Activated CD4-positive, alpha-beta T cell treated with anti-CD3 and anti-CD28 coated beads, Interleukin-2, amount 10 ng/mL, durations not matched to agents 24 days and 14 days (primary cell): ENCODE measurements at regions of chr3 and their contacts with region 1.

Region 1: DNA sequence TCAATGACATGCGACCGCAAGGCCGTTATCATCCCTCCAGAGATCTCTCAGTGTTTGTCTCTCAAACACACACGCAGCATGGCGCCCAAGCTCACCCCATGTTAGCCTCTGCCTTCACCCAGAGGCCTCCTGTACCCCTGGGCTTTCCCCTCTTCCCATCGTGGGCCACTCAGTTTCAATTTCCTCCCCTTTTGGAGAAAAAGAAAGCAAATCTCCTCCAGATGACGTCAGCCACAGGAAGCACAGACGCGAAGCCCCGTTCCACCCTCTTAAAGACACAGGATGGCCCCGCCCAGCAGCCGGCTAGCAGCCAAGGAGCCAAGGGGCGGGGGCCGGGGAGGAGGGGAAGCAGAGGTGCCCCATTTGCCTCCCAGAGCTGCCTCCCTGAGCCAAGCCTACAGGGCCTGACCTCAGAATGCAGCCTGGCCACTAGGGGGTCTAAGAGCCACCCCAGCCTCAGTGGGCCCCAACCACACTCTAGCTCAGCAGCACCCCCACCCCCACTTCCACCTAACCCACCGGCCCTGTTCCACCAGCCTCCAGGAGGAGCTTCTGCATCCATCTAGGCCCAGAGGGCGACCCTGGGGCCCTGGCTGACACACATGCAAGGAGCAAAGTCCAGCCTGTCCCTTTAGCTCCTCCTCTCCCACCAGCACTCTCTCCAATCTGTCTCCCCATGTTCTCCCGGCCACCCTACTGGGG is 26.5 kb downstream of the ATRIP start:
- DNase-seq: peak; percentile 98
- H3K4me3 Mint-ChIP-seq: peak overlapping the region; percentile 85
- H3K27ac Mint-ChIP-seq: peak overlapping the region; percentile 97
- H3K4me1 Mint-ChIP-seq: peaks cover 47% of the 10 kb centered on the region
- H3K27me3 Mint-ChIP-seq: no peaks in the 10 kb centered on the region

Region 2: GRCh38 chr3:48352547-48352946 is 120.5 kb before region 1 on chr3:
- intact Hi-C with region 1: no loop called
- DNase-seq: no peak
- H3K4me3 Mint-ChIP-seq: no peak overlapping the region
- H3K27ac Mint-ChIP-seq: no peak overlapping the region
- H3K4me1 Mint-ChIP-seq: no peaks in the 10 kb centered on the region
- H3K27me3 Mint-ChIP-seq: peaks cover 27% of the 10 kb centered on the region

Region 3: GRCh38 chr3:48446425-48447193 is 26.5 kb before region 1 on chr3 and contains the start of gene ATRIP:
- intact Hi-C with region 1: loop called (anchors 1 kb)
- DNase-seq: peak; percentile 98
- H3K4me3 Mint-ChIP-seq: peak within 1 kb of the TSS; percentile 93
- H3K27ac Mint-ChIP-seq: peak within 1 kb of the TSS; percentile 91
- H3K4me1 Mint-ChIP-seq: peaks cover 25% of the 10 kb centered on the region
- H3K27me3 Mint-ChIP-seq: no peaks in the 10 kb centered on the region
- total RNA-seq, gene ATRIP: 18.3 and 20.0 TPM in 2 replicates

Region 4: DNA sequence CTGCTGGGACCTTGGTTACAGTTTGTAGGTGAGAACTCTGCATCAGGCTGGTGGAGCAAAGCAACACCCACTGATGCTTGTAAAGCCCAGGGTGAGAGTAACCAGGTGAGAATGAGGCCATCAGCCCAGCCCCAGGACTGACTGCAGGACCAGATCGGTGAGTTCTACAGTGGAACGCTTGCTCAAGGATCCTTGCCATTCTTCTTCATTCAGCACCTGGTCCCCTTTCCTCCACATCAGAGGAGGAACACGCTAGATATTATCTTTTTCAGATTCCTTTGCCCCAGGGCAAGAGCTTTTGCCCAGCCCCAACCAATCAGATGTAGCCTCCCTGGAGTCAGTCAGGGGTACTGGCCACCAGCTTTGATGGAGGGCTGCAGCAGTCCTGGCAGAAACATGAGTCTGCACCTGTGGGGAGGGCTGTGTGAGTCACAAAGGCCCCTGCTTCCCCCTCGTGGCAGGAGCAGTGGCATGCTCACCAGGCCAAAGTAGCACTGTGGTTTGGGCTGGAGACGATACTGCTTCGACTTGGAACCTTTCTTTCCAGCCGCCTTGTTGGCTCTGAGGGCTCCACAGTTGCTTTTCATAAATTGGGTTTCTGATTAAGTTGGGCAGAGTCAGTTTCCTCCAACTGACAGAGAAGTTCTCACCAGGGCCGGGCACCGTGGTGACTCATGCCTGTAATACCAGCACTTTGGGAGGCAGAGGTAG is 34.4 kb after region 1 on chr3:
- intact Hi-C with region 1: loop called (anchors 1 kb)
- DNase-seq: peak; percentile 91
- H3K4me3 Mint-ChIP-seq: peak overlapping the region; percentile 38
- H3K27ac Mint-ChIP-seq: peak overlapping the region; percentile 44
- H3K4me1 Mint-ChIP-seq: peaks cover 40% of the 10 kb centered on the region
- H3K27me3 Mint-ChIP-seq: no peaks in the 10 kb centered on the region

Region 5: DNA sequence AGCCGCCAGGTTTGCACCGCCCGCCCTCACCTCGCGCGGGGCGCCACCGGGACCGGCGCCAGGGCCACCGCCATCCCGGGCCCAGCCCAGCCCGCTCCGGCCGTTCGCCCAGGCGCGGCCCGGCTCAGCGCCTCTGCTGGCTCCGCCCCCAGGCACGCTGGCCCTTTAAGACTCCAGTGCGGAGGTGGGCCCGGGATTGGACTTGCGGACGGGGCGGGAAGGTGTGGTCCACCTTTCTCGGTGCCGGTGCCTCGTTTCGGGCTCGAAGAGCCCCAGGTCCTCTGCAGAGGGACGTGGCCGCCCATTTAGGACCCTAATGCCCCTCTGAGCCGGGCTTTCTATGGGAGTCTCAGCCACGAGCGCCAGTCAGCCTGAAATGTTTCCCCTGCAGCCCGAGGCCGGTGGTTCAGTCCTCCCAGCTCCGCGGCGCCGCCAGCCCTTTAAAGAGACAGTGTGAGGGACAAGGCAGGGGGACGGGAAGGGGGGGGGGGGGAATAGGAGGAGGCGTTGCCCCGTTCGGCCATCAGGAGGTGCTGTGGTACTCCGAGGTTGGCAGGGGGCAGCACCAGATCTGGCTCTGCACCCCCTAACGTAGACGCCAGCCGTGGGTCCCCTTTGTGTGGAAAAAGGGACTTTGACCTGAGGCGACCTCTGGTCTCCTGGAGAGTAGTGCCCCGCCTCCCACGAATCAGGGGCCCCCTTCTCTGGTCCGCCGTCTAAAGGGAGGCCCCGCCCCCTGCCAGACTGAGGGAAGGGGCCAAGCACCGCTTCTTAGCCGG is 1848.5 kb after region 1 on chr3:
- intact Hi-C with region 1: loop called (anchors 10 kb)
- DNase-seq: peak; percentile 96
- H3K4me3 Mint-ChIP-seq: peak overlapping the region; percentile 88
- H3K27ac Mint-ChIP-seq: peak overlapping the region; percentile 92
- H3K4me1 Mint-ChIP-seq: peaks cover 27% of the 10 kb centered on the region
- H3K27me3 Mint-ChIP-seq: no peaks in the 10 kb centered on the region